PC-3 (cell line): ENCODE measurements at regions of chr1 and their contacts with region 1.

Region 1: DNA sequence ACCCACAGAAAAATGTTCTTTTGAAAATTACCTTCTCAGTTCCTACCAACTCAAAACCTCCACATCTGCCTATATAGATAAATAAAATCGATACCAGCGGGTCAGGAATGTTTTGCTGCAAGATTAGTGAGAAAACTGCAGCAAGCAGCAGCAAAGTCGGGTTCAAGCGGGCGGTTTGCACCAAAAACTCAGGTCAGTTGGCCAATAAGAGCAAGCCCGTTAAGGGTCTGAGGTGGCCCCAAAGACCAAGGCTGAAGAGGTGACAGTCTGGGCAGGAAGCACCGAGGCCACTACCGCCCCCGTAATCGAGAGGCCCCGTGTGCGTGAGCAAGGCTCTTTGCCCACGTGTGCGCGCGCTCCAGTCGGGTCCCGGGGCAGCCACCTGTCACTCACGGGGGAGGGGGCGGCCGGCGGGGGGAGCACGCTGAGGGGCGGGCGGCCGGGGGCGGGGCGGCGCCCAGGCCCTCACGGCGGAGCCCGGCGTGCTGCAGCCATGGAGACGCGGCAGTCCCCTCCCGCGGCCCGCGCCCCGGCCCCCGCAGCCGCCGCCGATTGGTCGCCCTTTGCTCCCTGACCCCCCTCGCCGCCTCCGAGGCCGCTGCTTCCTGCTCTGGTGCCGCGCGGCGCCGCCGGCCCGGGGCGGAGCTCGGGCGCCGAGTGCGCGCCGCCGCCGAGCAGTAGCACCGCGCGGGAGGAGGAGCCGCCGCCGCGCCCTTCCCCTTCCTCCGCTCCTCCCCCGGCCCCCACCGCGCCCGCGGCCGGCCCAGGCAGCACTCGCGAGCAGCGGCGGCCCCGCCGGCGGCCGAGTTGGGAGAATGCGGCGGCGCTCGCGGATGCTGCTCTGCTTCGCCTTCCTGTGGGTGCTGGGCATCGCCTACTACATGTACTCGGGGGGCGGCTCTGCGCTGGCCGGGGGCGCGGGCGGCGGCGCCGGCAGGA is at the start of gene GALNT2:
- DNase-seq: peak; percentile 98
- ATAC-seq: peak; percentile 86
- H3K4me3 ChIP-seq: peak within 1 kb of the TSS; percentile 84
- H3K27ac ChIP-seq: peak within 1 kb of the TSS; percentile 35
- H3K4me1 ChIP-seq: peaks cover 29% of the 10 kb centered on the region
- H3K27me3 ChIP-seq: no peaks in the 10 kb centered on the region
- CTCF ChIP-seq: no peak
- total RNA-seq, gene GALNT2: 182 and 193 TPM in 2 replicates

Region 2: GRCh38 chr1:230031131-230031530 is 35.6 kb before region 1 on chr1:
- CTCF ChIA-PET with region 1: no interaction called
- POLR2A ChIA-PET with region 1: no interaction called
- intact Hi-C with region 1: no loop called
- DNase-seq: peak; percentile 86
- ATAC-seq: peak; percentile 93
- H3K4me3 ChIP-seq: no peak overlapping the region
- H3K27ac ChIP-seq: no peak overlapping the region
- H3K4me1 ChIP-seq: peaks cover 3% of the 10 kb centered on the region; the same call in 1 of the 2 replicates
- H3K27me3 ChIP-seq: no peaks in the 10 kb centered on the region
- CTCF ChIP-seq: no peak

Region 3: DNA sequence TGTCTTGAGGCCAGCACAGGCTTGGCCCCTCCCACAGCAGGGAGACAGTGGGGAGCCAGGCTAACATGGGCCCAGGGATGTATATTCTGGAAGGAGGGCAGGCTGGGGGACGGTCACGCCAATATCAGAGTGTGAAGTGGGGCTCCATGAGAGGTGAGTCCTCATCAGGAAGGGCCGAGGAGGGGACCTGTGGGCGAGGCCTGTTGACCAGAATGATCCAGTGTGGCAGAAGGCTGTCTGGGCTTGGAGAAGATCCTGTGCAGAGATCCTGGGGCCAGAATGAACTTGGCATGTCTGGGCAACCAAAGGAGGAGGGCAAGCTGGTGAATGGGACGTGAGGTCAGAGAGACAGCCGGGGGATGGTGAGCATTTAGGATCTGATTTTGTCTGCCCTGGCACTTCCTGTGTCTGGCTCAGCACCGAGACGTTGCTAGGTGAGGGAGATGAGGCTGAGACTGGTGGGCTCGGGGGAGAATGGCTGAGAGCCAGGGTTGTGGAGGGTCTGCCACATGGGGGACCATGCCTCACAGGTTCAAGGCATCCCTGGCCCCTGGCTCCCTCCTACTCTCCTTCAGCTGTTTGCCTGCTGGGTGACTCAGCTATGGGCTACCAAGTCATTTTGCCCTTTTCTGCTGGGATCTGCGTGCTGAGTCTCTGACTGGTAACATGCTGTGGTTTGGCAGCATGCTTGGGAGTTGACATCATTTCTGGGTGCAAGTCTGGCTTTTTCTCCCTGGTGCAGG is 17.6 kb after region 1 on chr1:
- CTCF ChIA-PET with region 1: interaction called, 3 read pairs
- POLR2A ChIA-PET with region 1: no interaction called
- intact Hi-C with region 1: loop called (anchors 2 kb)
- DNase-seq: peak; percentile 100
- ATAC-seq: peak; percentile 93
- H3K4me3 ChIP-seq: peak overlapping the region; percentile 29; the same call in 1 of the 2 replicates
- H3K27ac ChIP-seq: peak overlapping the region; percentile 83
- H3K4me1 ChIP-seq: peaks cover 59% of the 10 kb centered on the region
- H3K27me3 ChIP-seq: no peaks in the 10 kb centered on the region
- CTCF ChIP-seq: no peak

Region 4: GRCh38 chr1:230090194-230090711 is 23.5 kb after region 1 on chr1:
- CTCF ChIA-PET with region 1: interaction called, 4 read pairs
- POLR2A ChIA-PET with region 1: interaction called, 4 read pairs
- intact Hi-C with region 1: loop called (anchors 1 kb)
- DNase-seq: peak; percentile 96
- ATAC-seq: peak; percentile 69
- H3K4me3 ChIP-seq: peak overlapping the region; percentile 49
- H3K27ac ChIP-seq: peak overlapping the region; percentile 90
- H3K4me1 ChIP-seq: peaks cover 82% of the 10 kb centered on the region
- H3K27me3 ChIP-seq: no peaks in the 10 kb centered on the region
- CTCF ChIP-seq: no peak

Region 5: DNA sequence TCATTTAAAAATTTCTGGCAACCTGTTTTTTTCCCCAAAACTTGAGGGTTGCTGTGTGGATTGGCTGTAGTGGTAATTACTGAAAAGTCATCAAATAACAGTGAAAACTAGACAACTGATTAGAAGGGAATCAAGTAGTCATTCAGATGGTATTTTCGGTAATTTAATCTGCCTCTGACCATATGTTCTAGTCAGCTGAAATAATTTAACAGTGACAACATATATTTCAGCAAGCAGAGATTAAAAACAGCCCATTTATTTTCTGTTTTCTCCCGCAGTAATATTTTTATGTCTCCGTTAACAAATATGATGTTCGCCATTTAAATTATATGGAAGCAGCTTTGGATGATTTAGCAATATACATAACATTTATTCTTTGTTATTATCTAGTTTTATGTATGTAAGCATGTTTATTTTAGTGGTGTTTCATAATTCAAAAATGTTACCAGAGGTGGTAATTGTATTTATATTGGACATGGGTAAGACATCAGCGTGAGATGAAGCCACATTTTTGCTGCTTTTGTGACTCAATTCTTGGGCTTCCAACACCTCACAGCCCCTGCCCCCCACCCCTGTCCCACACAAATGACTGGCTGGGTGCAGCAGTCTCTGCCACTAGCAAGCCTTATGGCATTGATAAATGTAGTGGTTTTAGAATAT is 104.8 kb after region 1 on chr1:
- CTCF ChIA-PET with region 1: interaction called, 4 read pairs
- POLR2A ChIA-PET with region 1: no interaction called
- intact Hi-C with region 1: loop called (anchors 1 kb)
- DNase-seq: peak; percentile 75
- ATAC-seq: peak; percentile 83
- H3K4me3 ChIP-seq: peak overlapping the region; percentile 15; the same call in 1 of the 2 replicates
- H3K27ac ChIP-seq: peak overlapping the region; percentile 61
- H3K4me1 ChIP-seq: peaks cover 34% of the 10 kb centered on the region
- H3K27me3 ChIP-seq: no peaks in the 10 kb centered on the region
- CTCF ChIP-seq: no peak

Region 6: DNA sequence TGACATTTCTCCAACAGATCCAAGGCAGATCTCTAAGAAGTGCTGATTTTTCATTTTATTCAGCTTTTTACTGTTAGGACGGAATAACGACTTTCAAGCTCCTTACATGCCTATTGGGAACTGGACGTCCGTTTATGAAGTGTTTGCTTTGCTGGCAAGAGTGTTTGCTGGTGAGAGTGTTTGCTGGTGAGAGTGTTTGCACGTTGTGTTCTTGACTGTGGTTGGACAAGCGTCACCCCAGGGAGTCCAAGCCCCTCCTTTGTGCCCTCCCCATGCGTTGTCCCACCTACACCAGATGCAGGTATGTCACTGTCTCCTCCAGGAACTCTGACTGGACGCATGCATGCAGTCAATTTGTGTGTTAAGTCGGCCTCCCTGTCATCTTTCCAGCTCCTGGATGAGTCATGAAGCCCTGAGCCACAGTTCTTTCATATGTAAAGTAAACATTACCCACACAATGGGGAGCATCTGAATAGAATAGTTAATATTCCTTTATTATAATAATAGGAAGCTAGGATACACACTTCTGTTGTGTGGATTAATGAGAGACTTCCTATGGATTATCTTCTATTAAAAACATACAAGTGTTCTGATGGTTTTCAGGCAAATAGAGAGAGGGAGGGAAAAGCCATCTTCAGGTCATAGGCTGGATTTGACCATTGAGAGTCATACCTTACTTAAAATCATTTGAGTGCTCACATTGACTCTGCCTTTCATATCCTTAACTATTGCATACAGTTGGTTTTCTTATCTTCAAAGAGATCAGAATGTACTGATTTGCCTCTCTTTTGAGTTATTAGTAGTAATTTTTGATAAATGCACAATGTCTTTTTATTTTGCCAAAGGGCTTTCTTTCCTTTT is 119.5 kb after region 1 on chr1:
- CTCF ChIA-PET with region 1: no interaction called
- POLR2A ChIA-PET with region 1: no interaction called
- intact Hi-C with region 1: loop called (anchors 2 kb)
- DNase-seq: peak; percentile 100
- ATAC-seq: peak; percentile 99
- H3K4me3 ChIP-seq: peak overlapping the region; percentile 43
- H3K27ac ChIP-seq: peak overlapping the region; percentile 65
- H3K4me1 ChIP-seq: peaks cover 23% of the 10 kb centered on the region
- H3K27me3 ChIP-seq: no peaks in the 10 kb centered on the region
- CTCF ChIP-seq: no peak

Region 7: GRCh38 chr1:230268366-230269170 is 201.8 kb after region 1 on chr1:
- CTCF ChIA-PET with region 1: no interaction called
- POLR2A ChIA-PET with region 1: no interaction called
- intact Hi-C with region 1: loop called (anchors 2 kb)
- DNase-seq: peak; percentile 80
- ATAC-seq: peak; percentile 83
- H3K4me3 ChIP-seq: no peak overlapping the region
- H3K27ac ChIP-seq: peak overlapping the region; percentile 8; the same call in 1 of the 2 replicates
- H3K4me1 ChIP-seq: peaks cover 4% of the 10 kb centered on the region; the same call in 1 of the 2 replicates
- H3K27me3 ChIP-seq: no peaks in the 10 kb centered on the region
- CTCF ChIP-seq: peak; percentile 85